ENCODE measurements at regions of chr11 and their contacts with region 1.

Region 1: DNA sequence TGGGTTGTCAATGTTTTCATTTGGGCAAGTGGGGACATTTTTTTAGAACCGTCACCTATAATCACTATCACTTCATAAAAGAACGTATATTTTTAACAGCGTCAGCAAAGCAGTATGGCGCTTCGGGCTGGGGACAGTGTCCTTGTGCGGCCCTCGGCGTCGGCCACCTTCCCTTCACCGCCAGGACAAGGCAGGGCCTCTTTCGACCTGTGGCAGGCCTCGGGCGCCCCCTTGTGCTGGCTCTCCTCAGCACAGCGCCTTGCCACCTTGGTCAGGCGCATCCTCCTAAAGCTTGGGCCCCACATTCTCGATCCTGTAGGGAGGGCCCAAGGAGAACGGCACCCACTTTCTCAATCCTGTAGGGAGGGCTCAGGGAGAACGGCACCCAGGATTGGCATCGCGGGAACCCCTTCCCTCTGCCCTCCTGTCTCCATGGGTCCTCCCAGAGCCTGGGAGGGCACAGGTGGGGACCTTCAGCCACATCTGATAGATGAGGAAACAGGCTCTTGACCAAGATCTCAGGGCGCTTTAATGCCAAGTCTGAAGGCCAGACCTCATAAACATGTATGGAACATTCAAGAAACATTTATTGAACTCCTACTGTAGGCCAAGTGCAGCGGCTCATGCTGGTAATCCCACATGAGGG is 11.5 kb upstream of the FADD start:
- H3K4me3 Mint-ChIP-seq: no peak overlapping the region
- H3K27ac Mint-ChIP-seq: no peak overlapping the region
- H3K4me1 Mint-ChIP-seq: peaks cover 4% of the 10 kb centered on the region
- H3K27me3 Mint-ChIP-seq: peaks cover 13% of the 10 kb centered on the region

Region 2: GRCh38 chr11:69683764-69684333 is 507.8 kb before region 1 on chr11:
- intact Hi-C with region 1: loop called (anchors 10 kb)
- H3K4me3 Mint-ChIP-seq: no peak overlapping the region
- H3K27ac Mint-ChIP-seq: no peak overlapping the region
- H3K4me1 Mint-ChIP-seq: peaks cover 9% of the 10 kb centered on the region
- H3K27me3 Mint-ChIP-seq: peaks cover 39% of the 10 kb centered on the region

Region 3: DNA sequence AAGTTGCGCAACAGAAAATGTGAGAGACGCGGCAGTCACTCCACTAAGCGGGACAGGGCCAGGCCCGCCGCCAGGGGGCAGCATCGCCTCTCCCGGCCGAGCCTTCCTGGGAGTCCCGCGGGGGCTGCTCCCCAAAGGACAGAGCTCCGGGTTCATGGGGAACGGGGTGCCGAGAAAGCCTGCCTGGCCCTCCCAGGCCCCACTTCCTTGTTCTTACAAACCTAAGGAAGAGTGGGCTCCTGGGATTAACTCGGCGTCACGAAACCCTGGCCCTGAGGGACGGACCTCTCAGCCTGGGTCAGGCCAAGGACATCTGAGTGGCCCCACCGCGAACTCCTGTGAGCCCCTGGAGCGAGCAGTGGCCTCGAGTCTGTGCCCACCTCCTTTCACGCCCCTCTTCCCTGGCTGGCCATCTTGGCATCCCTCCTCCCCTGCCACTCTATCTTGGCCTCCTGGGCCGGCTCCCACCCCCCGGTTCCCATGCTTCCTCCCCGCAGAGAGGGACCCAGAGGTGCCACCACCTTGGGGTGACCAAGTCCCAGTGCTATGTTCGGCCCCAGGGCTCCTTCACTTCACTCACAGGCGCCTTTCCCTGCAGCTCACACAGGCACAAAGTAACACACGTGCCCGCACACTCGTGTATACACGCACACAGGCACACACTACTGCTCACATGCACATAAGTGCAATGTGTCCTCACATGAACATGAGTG is 272.5 kb before region 1 on chr11:
- intact Hi-C with region 1: loop called (anchors 2 kb)
- H3K4me3 Mint-ChIP-seq: no peak overlapping the region
- H3K27ac Mint-ChIP-seq: no peak overlapping the region
- H3K4me1 Mint-ChIP-seq: no peaks in the 10 kb centered on the region
- H3K27me3 Mint-ChIP-seq: peaks cover 35% of the 10 kb centered on the region

Region 4: DNA sequence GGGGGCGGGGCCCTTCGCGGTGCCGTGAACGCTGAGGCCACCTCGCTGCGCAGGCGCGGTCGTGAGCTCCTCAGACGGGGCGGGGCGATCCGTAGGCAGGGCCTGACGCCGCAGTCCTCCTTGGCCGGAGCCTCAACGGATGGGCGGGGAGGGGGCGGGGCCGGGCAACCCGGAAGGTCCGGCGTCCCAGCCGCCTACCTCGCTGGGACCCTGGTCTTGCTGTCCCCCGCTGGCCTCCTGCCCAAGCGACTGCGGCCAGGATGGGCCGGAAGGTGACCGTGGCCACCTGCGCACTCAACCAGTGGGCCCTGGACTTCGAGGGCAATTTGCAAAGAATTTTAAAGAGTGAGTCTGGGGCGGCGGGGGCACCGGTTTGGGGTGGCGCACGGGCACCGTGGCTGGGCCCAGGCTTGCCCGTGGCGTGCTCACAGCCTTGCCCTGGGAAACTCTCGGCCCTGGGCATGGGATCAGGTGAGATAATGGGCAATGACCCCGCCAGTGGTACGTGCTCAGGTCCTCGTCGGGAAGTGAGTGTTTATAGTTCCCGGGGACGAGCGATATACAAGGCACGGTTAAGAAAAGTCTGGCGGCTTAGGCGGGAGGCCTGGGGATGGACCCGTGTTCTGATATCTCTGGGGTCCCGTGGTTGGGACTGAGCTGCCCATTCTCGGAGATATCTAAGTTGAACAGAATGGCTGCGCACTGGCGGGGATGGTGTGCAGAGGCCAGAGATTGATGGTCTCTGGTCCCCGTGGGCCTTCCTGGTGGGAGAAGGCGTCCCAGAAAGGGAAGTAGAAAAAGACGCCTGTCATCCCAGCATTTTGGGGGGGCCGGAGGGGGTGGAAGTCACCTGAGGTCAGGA is 1261.7 kb after region 1 on chr11 and contains the start of gene NADSYN1:
- intact Hi-C with region 1: loop called (anchors 5 kb)
- H3K4me3 Mint-ChIP-seq: peak within 1 kb of the TSS; percentile 91
- H3K27ac Mint-ChIP-seq: peak within 1 kb of the TSS; percentile 94
- H3K4me1 Mint-ChIP-seq: peaks cover 71% of the 10 kb centered on the region
- H3K27me3 Mint-ChIP-seq: no peaks in the 10 kb centered on the region

Measured in dendritic cell treated with granulocyte-macrophage colony-stimulating factor and Interleukin-4, amounts not matched to agents 40 ng/mL and 50 ng/mL, for 4 days (primary cell).